ENCODE measurements at regions of chr6 and their contacts with region 1.

Region 1: DNA sequence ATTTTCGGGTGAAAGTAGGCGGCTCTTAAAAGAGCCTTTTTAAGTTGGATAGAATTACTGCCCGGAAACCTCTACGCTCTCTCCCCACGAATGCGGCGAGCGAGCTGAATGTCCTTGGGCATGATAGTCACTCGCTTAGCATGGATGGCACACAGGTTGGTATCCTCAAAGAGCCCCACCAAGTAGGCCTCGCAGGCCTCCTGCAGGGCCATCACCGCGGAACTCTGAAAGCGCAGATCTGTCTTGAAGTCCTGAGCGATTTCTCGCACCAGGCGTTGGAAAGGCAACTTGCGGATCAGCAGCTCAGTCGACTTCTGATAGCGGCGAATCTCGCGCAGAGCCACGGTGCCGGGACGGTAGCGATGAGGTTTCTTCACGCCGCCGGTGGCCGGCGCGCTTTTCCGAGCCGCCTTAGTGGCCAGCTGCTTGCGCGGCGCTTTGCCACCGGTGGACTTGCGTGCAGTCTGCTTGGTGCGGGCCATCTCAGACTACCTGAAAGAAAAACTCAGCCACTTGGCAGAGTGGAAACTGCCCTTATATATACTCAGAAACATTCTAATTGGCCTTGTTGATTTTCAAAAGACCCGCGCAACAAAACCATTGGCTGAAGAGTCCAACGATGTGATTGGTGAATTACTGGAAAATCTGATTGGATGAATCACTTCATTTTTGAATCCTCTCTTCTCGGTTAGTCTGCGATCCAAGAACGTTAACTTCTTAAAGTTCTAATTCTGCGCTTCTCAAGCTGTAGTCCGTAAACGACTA is 93.9 kb upstream of the BTN3A2 start:
- DNase-seq: peak; percentile 91
- ATAC-seq: peak; percentile 47
- H3K4me3 Mint-ChIP-seq: no peak overlapping the region
- H3K27ac Mint-ChIP-seq: no peak overlapping the region
- H3K4me1 Mint-ChIP-seq: peaks cover 40% of the 10 kb centered on the region
- H3K27me3 Mint-ChIP-seq: no peaks in the 10 kb centered on the region

Region 2: DNA sequence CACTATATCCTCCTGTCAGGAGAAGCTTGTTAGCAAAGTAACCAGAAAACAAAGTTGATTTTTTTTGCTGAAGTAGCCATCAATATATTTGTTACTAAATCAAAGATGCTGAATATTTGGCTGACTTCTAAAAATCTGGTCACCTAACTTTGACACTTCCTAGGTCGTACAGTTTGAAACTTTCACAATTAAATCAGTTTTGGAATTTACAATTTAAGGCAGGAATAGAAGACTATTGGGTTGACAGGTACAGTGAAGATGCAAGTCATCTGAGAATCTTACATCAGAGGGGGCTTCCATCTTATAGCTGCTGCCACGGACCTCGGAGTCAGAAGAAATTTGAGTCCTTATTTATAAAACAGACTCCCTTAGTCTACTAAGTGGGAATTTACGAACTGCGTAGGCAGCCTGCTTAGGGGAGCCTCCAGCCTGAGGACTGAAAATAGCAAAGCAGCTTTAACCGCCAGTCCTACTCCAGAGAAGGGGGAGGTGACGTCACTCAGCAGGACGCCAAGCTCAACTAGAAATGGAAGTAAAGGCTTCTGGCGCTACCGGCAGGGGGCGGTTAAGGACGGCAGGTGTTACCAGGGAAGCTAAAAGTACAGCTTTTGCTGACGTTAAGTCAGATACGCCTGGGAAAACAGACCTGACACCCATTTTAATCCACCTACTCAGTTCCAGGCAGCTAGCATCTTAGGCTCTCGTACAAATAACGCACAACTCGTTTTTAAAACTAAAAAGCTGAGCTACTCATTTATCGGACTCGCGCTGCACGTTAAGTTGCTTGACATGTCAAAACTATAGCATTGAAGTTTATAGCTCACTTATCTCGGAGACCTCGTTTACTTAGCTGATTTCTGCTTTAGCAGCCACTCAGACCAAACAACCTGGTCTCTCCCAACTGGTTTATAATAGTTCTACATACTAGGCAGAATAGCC is 244.9 kb before region 1 on chr6:
- CTCF ChIA-PET with region 1: interaction called, 3 read pairs
- POLR2A ChIA-PET with region 1: interaction called, 80 read pairs
- DNase-seq: peak; percentile 97
- ATAC-seq: peak; percentile 42
- H3K4me3 Mint-ChIP-seq: peak overlapping the region; percentile 86
- H3K27ac Mint-ChIP-seq: peak overlapping the region; percentile 99
- H3K4me1 Mint-ChIP-seq: peaks cover 86% of the 10 kb centered on the region
- H3K27me3 Mint-ChIP-seq: peaks cover 3% of the 10 kb centered on the region

Region 3: DNA sequence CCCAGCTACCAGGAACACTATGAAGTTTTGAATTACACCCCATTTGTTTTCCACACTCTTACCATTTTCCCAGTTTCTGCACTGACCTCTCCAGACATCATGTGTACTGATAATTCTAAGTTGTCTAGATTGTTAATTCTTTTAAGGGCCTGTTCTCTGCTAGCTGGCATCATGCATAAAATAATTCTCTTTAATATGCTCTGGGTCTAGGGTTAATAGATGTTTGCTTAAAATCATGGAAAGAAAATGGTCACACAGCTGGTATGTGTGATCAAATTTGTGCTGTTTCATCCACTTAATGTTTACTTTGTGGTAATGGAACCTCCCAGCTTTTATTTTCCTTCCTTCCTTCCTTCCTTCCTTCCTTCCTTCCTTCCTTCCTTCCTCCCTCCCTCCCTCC is 134.8 kb before region 1 on chr6:
- CTCF ChIA-PET with region 1: no interaction called
- POLR2A ChIA-PET with region 1: no interaction called
- DNase-seq: no peak
- ATAC-seq: no peak
- H3K4me3 Mint-ChIP-seq: no peak overlapping the region
- H3K27ac Mint-ChIP-seq: no peak overlapping the region
- H3K4me1 Mint-ChIP-seq: peaks cover 8% of the 10 kb centered on the region
- H3K27me3 Mint-ChIP-seq: no peaks in the 10 kb centered on the region

Region 4: GRCh38 chr6:26156076-26156849 is 114.8 kb before region 1 on chr6:
- CTCF ChIA-PET with region 1: no interaction called
- POLR2A ChIA-PET with region 1: interaction called, 174 read pairs
- DNase-seq: peak; percentile 91
- ATAC-seq: peak; percentile 55
- H3K4me3 Mint-ChIP-seq: peak overlapping the region; percentile 94
- H3K27ac Mint-ChIP-seq: peak overlapping the region; percentile 99
- H3K4me1 Mint-ChIP-seq: peaks cover 37% of the 10 kb centered on the region
- H3K27me3 Mint-ChIP-seq: peaks cover 8% of the 10 kb centered on the region

Region 5: DNA sequence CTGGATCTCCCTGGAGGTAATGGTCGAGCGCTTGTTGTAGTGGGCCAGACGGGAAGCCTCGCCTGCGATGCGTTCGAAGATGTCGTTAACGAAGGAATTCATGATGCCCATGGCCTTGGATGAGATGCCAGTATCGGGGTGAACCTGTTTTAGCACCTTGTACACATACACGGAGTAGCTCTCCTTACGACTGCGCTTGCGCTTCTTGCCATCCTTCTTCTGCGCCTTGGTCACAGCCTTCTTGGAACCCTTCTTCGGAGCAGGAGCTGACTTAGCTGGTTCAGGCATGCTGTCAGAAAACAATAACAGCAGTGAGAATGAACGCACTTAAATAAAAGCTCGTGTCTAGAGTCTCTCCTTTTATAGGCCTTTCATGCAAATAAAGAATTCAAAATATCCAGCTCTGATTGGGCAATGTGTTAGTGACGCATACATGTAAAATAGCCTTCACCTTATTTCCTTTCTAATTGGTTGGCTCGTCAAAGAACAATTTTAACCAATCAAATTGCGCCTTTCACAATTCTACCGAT is 54.7 kb before region 1 on chr6:
- CTCF ChIA-PET with region 1: interaction called, 6 read pairs
- POLR2A ChIA-PET with region 1: interaction called, 232 read pairs
- DNase-seq: peak; percentile 93
- ATAC-seq: peak; percentile 67
- H3K4me3 Mint-ChIP-seq: no peak overlapping the region
- H3K27ac Mint-ChIP-seq: no peak overlapping the region
- H3K4me1 Mint-ChIP-seq: peaks cover 43% of the 10 kb centered on the region
- H3K27me3 Mint-ChIP-seq: no peaks in the 10 kb centered on the region

Region 6: DNA sequence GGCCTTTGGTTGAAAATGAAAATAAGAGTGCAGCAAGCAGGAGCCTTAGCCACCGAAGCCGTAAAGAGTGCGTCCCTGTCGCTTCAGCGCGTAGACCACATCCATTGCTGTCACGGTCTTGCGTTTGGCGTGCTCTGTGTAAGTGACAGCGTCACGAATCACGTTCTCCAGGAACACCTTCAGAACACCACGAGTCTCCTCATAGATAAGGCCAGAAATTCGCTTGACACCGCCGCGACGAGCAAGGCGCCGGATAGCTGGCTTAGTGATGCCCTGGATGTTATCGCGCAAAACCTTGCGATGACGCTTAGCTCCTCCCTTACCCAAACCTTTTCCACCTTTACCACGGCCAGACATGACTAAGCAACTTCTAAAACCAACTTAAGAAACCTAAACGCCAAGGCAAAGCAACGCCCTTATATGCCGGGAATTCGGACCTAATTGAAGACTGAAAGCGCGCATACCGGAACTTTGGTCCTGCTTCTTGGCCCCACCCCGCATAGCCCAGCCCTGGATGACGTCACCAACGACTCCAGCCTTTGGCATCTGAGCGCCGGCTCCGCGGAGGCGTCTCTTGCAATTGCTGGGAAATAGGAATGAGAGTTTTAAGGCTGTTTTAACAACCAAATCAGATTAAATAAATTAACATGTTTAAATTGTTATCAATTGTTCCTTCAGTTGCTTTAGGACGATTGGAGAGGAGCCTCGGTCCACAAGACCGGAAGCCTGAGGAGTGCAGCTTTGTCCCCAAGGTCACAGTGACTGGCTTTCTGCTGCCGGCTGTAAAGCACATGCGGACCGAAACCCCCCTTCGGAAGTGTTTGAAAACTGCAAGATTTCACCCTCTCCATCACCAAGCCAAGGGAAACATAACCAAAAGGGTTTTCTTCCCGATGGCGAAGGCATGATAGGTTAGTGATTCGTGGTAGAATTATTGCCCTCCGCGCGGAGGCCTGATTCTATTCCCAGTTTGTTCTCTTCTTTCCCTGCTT is 14.4 kb after region 1 on chr6:
- CTCF ChIA-PET with region 1: interaction called, 36 read pairs
- POLR2A ChIA-PET with region 1: interaction called, 548 read pairs
- DNase-seq: peak; percentile 99
- ATAC-seq: peak; percentile 79
- H3K4me3 Mint-ChIP-seq: peak overlapping the region; percentile 93
- H3K27ac Mint-ChIP-seq: peak overlapping the region; percentile 95
- H3K4me1 Mint-ChIP-seq: peaks cover 42% of the 10 kb centered on the region
- H3K27me3 Mint-ChIP-seq: peaks cover 2% of the 10 kb centered on the region

Region 7: DNA sequence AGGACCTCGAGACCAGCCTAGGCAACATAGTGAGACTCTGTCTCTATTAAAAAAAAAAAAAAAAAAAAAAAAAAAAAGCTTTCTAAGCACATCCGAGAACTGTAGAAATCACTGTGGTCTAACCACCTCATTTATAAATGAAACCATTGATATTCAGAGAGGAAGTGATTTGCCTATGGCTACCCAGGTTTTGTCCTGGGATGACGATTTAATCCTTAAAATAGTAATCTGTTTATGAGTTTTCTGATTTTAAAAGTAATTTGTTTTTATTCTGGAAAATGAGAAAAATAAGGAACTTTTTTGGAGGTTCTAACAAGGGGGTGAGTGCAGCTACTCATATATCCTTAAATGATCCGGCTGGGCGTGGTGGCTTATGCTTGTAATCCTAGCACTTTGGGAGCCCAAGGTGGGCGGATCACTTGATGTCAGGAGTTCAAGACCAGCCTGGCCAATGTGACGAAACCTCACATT is 87.5 kb after region 1 on chr6:
- CTCF ChIA-PET with region 1: no interaction called
- POLR2A ChIA-PET with region 1: no interaction called
- DNase-seq: no peak
- ATAC-seq: no peak
- H3K4me3 Mint-ChIP-seq: no peak overlapping the region
- H3K27ac Mint-ChIP-seq: no peak overlapping the region
- H3K4me1 Mint-ChIP-seq: peaks cover 39% of the 10 kb centered on the region
- H3K27me3 Mint-ChIP-seq: peaks cover 2% of the 10 kb centered on the region

Region 8: GRCh38 chr6:26537846-26538571 is 266.9 kb after region 1 on chr6 and contains the start of gene HMGN4:
- CTCF ChIA-PET with region 1: interaction called, 4 read pairs
- POLR2A ChIA-PET with region 1: interaction called, 11 read pairs
- DNase-seq: peak; percentile 88
- ATAC-seq: peak; percentile 71
- H3K4me3 Mint-ChIP-seq: peak within 1 kb of the TSS; percentile 87
- H3K27ac Mint-ChIP-seq: peak within 1 kb of the TSS; percentile 99
- H3K4me1 Mint-ChIP-seq: peaks cover 58% of the 10 kb centered on the region
- H3K27me3 Mint-ChIP-seq: peaks cover 2% of the 10 kb centered on the region
- total RNA-seq, gene HMGN4: 80.8 to 84.9 TPM

Region 9: GRCh38 chr6:27838058-27838944 is 1567.2 kb after region 1 on chr6:
- CTCF ChIA-PET with region 1: no interaction called
- POLR2A ChIA-PET with region 1: interaction called, 28 read pairs
- DNase-seq: peak; percentile 92
- ATAC-seq: peak; percentile 78
- H3K4me3 Mint-ChIP-seq: no peak overlapping the region
- H3K27ac Mint-ChIP-seq: no peak overlapping the region
- H3K4me1 Mint-ChIP-seq: peaks cover 33% of the 10 kb centered on the region
- H3K27me3 Mint-ChIP-seq: no peaks in the 10 kb centered on the region

Measured in activated CD8-positive, alpha-beta T cell treated with anti-CD3 and anti-CD28 coated beads, Interleukin-2, amount 10 ng/mL, durations not matched to agents 7 days and 5 days (primary cell).